ENCODE measurements at regions of chr18 and their contacts with region 1.

Region 1: DNA sequence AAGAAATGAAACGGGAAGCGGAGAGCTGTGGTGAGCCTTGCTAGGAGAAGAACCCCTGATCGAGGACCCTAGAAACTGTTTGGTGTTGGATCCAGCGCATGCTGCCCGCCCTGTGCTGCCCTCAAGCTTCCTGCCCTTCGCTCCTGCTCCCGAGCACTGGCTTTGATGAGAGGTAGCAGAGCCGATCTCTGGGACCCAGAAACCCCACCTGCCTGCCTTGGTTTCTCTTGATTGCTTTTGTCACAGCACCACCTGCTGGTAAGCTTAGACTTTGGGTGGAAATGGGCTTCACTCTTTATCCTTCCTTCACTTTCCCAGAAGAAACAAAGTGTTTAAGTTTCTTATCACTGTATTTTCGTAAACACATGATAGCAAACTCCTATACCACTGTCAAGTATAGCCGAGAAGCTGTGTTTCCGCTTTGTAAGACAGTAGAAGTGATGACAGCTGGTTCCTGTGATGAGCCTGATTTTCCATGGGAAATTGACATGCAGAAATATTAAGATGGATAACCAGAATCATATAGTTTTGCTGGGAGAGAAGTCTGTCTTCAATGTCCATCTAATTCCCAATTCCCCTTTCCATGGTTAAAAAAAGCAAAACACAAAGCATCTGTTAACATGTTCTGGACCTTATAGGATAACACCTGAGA is 267.4 kb downstream of the PHLPP1 start:
- DNase-seq: peak; percentile 49 to 92 (median 78)

Region 2: GRCh38 chr18:62590799-62591590 is 391.7 kb before region 1 on chr18:
- intact Hi-C with region 1: loop called (anchors 5 kb)
- DNase-seq: no peak

Region 3: DNA sequence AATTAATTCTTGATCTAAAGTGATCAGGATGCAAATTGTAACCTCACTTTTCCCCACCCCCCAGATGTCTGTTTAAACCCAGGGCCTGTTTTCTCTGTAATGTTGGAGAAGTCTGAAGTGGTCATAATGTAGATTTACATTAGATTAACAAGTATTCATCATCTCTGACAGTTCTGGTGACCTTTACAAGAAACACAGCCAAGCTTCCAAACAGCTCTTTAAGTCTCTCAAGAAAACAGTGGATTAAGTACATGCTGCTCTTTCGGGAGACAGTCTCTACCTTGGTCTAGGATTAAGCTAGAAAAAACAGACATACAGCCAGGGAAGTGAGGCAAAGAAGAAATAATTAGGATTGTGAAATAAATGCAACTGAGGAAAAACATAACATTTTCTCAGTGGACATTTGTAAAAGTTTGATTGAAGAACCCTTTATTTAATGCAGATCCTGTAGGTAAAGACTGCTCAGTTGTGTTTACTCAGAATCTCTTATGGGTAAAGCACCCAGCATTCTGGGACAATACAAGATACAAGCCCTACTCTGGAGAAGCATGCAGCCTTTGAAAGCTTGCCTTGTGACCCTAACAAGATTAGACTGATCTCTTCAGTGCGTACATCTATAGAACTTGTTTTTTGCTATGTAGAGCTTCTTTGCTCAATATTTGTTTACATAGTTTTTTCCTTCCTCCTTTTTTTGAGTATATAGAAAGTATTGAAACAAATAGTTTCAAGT is 63.5 kb before region 1 on chr18:
- intact Hi-C with region 1: loop called (anchors 10 kb)
- DNase-seq: no peak